HepG2 (cell line): ENCODE measurements at regions of chr7 and their contacts with region 1.

Region 1: DNA sequence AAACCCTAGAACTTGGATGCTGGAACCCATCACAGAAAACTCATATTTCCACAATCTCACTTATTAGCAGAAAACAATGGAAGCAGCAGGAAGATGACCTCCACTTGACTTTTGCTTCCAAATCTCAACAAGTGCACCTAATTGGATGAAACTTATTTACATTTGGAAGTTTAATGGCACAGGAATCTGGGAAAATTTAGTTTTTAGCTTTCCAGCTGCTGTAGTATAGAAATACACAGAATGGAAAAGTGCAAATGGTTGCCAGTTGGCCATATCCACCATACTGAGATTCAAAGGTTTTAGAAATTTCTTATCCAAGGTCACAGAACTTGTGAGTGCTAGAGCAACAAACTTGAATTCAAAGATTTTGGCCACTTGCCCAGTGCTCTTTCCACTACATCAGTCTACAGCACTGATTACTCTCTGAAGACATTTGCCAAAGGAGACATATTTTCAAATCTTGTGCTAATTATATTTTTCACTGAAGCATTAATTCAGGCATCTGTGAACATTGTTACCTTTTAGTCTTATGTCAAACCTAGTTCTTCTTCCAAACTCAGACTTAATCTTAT is 9.3 kb upstream of the AHR start:
- DNase-seq: no peak
- ATAC-seq: no peak
- H3K4me3 ChIP-seq: no peak overlapping the region
- H3K27ac ChIP-seq: no peak overlapping the region
- H3K4me1 ChIP-seq: no peaks in the 10 kb centered on the region
- H3K27me3 ChIP-seq: no peaks in the 10 kb centered on the region
- CTCF ChIP-seq: no peak
- EP300 ChIP-seq: no peak
- POLR2A ChIP-seq: no peak
- RAD21 ChIP-seq: no peak

Region 2: DNA sequence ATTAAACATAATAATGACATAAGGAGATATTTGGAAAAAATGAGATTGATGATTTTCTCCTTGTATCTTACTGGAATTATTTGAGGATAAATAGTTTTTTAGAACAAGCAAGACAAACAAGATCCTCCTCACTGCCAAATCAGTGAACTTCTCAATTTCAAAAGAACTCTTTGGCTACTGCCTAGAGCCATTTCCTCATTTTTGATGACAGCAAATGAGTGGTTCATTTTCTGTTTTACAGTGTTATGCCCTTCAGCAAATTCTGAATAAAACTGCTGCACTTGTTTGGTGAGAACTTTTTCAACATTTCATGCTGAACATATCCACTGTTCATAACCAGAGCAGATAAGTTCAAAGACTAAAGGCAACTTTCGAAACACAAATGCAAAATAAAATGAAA is 33.2 kb before region 1 on chr7:
- CTCF ChIA-PET with region 1: no interaction called
- POLR2A ChIA-PET with region 1: no interaction called
- in situ Hi-C with region 1: no loop called
- intact Hi-C with region 1: loop called (anchors 2 kb)
- DNase-seq: no peak
- ATAC-seq: no peak
- H3K4me3 ChIP-seq: no peak overlapping the region
- H3K27ac ChIP-seq: no peak overlapping the region
- H3K4me1 ChIP-seq: no peaks in the 10 kb centered on the region
- H3K27me3 ChIP-seq: no peaks in the 10 kb centered on the region
- CTCF ChIP-seq: no peak
- EP300 ChIP-seq: no peak
- POLR2A ChIP-seq: no peak
- RAD21 ChIP-seq: no peak

Region 3: DNA sequence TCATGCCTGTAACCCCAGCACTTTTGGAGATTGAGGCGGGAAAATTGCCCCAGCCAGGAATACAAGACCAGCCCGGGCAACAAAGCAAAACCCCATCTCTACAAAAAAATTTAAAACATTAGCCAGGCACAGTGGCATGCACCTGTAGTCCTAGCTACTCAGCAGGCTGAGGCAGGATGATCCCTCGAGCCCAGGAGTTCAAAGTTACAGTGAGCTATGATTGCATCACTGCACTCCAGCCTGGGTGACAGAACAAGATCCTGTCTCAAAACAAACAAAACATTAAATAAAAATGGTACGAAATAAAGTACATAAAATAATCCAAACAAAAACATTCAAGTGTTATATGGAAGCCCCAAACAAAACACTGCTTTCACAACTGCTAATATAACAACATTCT is 526.2 kb after region 1 on chr7:
- CTCF ChIA-PET with region 1: no interaction called
- POLR2A ChIA-PET with region 1: no interaction called
- in situ Hi-C with region 1: no loop called
- intact Hi-C with region 1: no loop called
- DNase-seq: peak; percentile 70
- ATAC-seq: peak; percentile 98
- H3K4me3 ChIP-seq: no peak overlapping the region
- H3K27ac ChIP-seq: peak overlapping the region; percentile 13
- H3K4me1 ChIP-seq: peaks cover 30% of the 10 kb centered on the region
- H3K27me3 ChIP-seq: no peaks in the 10 kb centered on the region
- CTCF ChIP-seq: no peak
- EP300 ChIP-seq: 0 out of 4 replicates have a peak, but pooled peaks of 1 of the 2 experiments have one; percentile 34
- POLR2A ChIP-seq: no peak
- RAD21 ChIP-seq: no peak